ENCODE measurements at regions of chr5 and their contacts with region 1.

Region 1: GRCh38 chr5:95781101-95781583 is 41.4 kb downstream of the GLRX start:
- DNase-seq: peak; percentile 82
- ATAC-seq: peak; percentile 97
- H3K4me3 Mint-ChIP-seq: no peak overlapping the region
- H3K27ac Mint-ChIP-seq: peak overlapping the region; percentile 26
- H3K4me1 Mint-ChIP-seq: peaks cover 38% of the 10 kb centered on the region
- H3K27me3 Mint-ChIP-seq: no peaks in the 10 kb centered on the region

Region 2: DNA sequence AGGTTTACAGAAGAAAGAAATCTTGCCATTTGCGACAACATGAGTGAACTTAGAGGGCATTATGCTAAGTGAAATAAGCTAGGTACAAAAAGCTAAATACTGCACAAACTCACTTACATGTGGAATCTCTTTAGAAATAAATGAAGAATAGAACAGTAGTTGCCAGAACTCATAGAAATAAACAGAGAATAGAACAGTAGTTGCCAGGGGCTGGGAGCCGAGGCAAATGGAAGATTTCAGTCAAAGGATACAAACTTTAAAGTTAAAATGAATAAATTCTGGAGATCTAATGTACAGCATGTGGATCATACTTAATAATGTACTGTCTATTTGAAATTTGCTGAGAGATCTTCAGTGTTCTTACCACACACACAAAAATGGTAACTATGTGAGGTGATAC is 326.6 kb before region 1 on chr5:
- CTCF ChIA-PET with region 1: no interaction called
- POLR2A ChIA-PET with region 1: no interaction called
- DNase-seq: no peak
- ATAC-seq: no peak
- H3K4me3 Mint-ChIP-seq: no peak overlapping the region
- H3K27ac Mint-ChIP-seq: no peak overlapping the region
- H3K4me1 Mint-ChIP-seq: no peaks in the 10 kb centered on the region
- H3K27me3 Mint-ChIP-seq: no peaks in the 10 kb centered on the region

Region 3: DNA sequence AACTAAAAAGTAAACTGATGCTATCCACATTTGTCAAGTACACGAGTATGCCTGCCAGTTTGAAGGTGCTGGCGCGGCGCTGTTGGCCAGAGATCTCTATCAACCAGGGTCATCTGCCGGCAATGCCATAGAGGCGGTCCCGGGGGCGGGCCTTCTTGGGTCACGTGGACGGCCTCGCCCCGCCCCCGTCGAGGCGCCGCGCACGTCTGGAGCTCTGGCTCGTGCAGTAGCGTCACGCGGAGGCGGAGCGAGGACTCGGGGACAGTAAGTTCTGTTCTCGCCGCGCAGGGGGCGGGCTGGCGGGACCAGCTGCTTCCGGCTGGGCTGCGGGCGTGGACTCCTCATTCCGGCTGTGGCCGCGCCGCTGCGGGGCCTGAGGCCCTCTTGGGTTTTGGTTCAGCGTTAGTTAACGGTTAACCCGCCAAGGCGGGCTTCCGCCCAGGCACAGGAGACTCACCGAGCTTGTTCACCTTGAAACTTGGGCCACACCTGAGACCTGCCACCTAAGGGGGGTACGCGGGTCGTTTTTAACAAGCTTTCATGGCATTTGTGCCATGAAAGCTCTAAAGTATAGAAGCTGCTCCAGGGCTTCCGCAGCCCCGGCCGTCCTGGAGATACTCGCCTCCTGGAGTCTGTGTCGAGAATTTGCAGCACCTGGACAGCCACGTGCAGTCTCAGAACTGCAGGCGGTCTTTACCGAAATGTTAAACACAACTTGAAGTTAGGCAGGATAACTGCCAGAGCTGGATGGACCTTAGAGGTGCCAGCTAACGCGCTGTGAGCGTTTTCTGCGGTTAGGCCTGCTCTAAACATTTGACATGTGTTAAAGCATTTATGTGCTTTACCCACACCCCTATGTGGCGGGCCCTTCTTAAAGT is 134.3 kb before region 1 on chr5 and contains the start of gene RFESD:
- CTCF ChIA-PET with region 1: interaction called, 67 read pairs
- POLR2A ChIA-PET with region 1: no interaction called
- DNase-seq: peak; percentile 97
- ATAC-seq: peak; percentile 97
- H3K4me3 Mint-ChIP-seq: peak within 1 kb of the TSS; percentile 78
- H3K27ac Mint-ChIP-seq: peak within 1 kb of the TSS; percentile 88
- H3K4me1 Mint-ChIP-seq: peaks cover 36% of the 10 kb centered on the region
- H3K27me3 Mint-ChIP-seq: no peaks in the 10 kb centered on the region
- total RNA-seq, gene RFESD: 4.9 to 5.1 TPM

Region 4: GRCh38 chr5:95730730-95731570 is 50.2 kb before region 1 on chr5 and contains the start of gene RHOBTB3:
- CTCF ChIA-PET with region 1: interaction called, 15 read pairs
- POLR2A ChIA-PET with region 1: no interaction called
- DNase-seq: peak; percentile 36
- ATAC-seq: peak; percentile 73
- H3K4me3 Mint-ChIP-seq: peak within 1 kb of the TSS; percentile 69
- H3K27ac Mint-ChIP-seq: no peak within 1 kb of the TSS
- H3K4me1 Mint-ChIP-seq: peaks cover 21% of the 10 kb centered on the region
- H3K27me3 Mint-ChIP-seq: peaks cover 47% of the 10 kb centered on the region
- total RNA-seq, gene RHOBTB3: 0.21 to 0.32 TPM

Region 5: DNA sequence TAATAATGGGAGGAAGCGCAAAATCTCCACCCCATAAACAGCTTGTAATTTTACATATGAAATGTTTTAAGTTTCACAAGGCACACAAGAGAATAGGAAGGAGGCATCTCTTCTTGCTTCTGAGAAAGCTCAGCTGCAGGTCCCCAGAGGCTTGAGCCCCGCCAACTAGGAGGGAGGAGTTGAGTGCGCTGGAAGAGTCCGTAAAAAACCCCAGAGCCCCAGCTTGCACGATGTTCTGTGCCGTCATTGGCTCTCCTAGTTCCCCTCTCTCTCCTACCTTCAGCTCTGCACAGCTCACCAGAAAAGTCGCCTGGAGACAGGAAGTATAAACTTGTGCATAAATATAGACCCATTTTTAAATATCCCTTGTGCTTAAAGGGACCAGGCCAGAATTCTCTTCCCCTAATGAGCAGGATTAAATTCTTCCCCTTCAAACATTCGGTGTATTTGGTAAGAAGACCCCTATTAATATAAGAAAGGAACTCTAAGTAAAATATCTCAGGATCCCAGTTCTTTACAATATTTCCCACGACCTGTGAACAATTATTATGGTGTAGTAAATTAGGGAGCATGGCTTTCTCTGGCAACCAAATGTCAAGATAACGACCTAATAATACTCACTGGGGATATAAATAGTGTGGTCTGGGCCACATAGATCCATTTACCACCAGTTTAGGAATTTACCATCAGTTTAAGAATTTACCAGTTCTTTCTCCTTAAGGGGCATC is 27.7 kb after region 1 on chr5:
- CTCF ChIA-PET with region 1: interaction called, 80 read pairs
- POLR2A ChIA-PET with region 1: no interaction called
- DNase-seq: peak; percentile 92
- ATAC-seq: peak; percentile 100
- H3K4me3 Mint-ChIP-seq: peak overlapping the region; percentile 58
- H3K27ac Mint-ChIP-seq: peak overlapping the region; percentile 85
- H3K4me1 Mint-ChIP-seq: peaks cover 62% of the 10 kb centered on the region
- H3K27me3 Mint-ChIP-seq: no peaks in the 10 kb centered on the region

Region 6: DNA sequence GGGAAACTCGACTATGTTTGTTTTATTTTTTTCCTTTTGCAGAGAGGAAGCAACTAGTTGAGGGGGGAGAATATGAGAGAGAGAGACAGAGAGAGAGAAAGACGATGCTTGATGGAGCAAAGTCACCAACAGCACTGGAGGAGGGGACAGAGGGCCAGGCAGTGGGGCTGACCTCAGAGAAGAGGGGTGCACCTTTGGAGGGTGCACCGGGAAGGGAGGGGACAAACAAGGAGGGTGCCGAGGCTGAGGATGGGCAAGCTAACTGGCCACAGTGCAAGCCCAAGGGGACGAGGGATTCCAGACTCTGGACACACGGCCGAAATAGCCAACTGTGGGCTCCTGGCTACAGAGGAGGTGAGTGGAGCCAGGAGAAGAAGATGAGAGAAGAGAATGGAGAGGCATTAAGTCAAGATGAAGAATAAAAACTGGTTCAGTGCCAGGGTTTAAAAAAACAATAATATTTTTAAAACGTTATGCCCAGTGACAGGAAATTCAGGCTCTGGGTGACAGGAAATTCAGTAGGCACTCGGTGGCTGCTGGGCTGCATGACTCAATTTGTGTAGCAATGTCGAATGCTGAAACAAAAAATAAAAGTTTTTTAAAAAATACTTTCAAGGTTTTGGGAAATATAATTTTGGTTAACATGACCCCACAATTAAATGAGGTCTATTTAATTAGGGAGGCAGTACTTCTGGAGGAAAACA is 54.7 kb after region 1 on chr5:
- CTCF ChIA-PET with region 1: interaction called, 536 read pairs
- POLR2A ChIA-PET with region 1: no interaction called
- DNase-seq: no peak
- ATAC-seq: no peak
- H3K4me3 Mint-ChIP-seq: peak overlapping the region; percentile 80
- H3K27ac Mint-ChIP-seq: peak overlapping the region; percentile 94
- H3K4me1 Mint-ChIP-seq: peaks cover 60% of the 10 kb centered on the region
- H3K27me3 Mint-ChIP-seq: no peaks in the 10 kb centered on the region

Region 7: GRCh38 chr5:95870105-95870672 is 89.0 kb after region 1 on chr5:
- CTCF ChIA-PET with region 1: interaction called, 10 read pairs
- POLR2A ChIA-PET with region 1: no interaction called
- DNase-seq: peak; percentile 42
- ATAC-seq: peak; percentile 56
- H3K4me3 Mint-ChIP-seq: peak overlapping the region; percentile 69
- H3K27ac Mint-ChIP-seq: peak overlapping the region; percentile 91
- H3K4me1 Mint-ChIP-seq: peaks cover 31% of the 10 kb centered on the region
- H3K27me3 Mint-ChIP-seq: no peaks in the 10 kb centered on the region

Region 8: GRCh38 chr5:96054311-96055030 is 273.3 kb after region 1 on chr5:
- CTCF ChIA-PET with region 1: no interaction called
- POLR2A ChIA-PET with region 1: no interaction called
- DNase-seq: no peak
- ATAC-seq: no peak
- H3K4me3 Mint-ChIP-seq: no peak overlapping the region
- H3K27ac Mint-ChIP-seq: no peak overlapping the region
- H3K4me1 Mint-ChIP-seq: no peaks in the 10 kb centered on the region
- H3K27me3 Mint-ChIP-seq: peaks cover 7% of the 10 kb centered on the region

Measured in activated CD8-positive, alpha-beta T cell treated with anti-CD3 and anti-CD28 coated beads, Interleukin-2, amount 10 ng/mL, durations not matched to agents 7 days and 5 days (primary cell).